Activated CD4-positive, alpha-beta memory T cell treated with anti-CD3 and anti-CD28 coated beads for 36 hours (primary cell): ENCODE measurements at regions of chr7 and their contacts with region 1.

Region 1: GRCh38 chr7:27547401-27547800 is 115.3 kb downstream of the HIBADH start:
- DNase-seq: no peak
- H3K4me3 Mint-ChIP-seq: no peak overlapping the region
- H3K27ac Mint-ChIP-seq: no peak overlapping the region
- H3K4me1 Mint-ChIP-seq: no peaks in the 10 kb centered on the region
- H3K27me3 Mint-ChIP-seq: no peaks in the 10 kb centered on the region

Region 2: GRCh38 chr7:29078311-29079260 is 1531.2 kb after region 1 on chr7:
- CTCF ChIA-PET with region 1: no interaction called
- POLR2A ChIA-PET with region 1: no interaction called
- intact Hi-C with region 1: loop called (anchors 10 kb)
- DNase-seq: no peak
- H3K4me3 Mint-ChIP-seq: no peak overlapping the region
- H3K27ac Mint-ChIP-seq: no peak overlapping the region
- H3K4me1 Mint-ChIP-seq: no peaks in the 10 kb centered on the region
- H3K27me3 Mint-ChIP-seq: no peaks in the 10 kb centered on the region